IMR-90 (cell line): ENCODE measurements at regions of chr16 and their contacts with region 1.

Region 1: DNA sequence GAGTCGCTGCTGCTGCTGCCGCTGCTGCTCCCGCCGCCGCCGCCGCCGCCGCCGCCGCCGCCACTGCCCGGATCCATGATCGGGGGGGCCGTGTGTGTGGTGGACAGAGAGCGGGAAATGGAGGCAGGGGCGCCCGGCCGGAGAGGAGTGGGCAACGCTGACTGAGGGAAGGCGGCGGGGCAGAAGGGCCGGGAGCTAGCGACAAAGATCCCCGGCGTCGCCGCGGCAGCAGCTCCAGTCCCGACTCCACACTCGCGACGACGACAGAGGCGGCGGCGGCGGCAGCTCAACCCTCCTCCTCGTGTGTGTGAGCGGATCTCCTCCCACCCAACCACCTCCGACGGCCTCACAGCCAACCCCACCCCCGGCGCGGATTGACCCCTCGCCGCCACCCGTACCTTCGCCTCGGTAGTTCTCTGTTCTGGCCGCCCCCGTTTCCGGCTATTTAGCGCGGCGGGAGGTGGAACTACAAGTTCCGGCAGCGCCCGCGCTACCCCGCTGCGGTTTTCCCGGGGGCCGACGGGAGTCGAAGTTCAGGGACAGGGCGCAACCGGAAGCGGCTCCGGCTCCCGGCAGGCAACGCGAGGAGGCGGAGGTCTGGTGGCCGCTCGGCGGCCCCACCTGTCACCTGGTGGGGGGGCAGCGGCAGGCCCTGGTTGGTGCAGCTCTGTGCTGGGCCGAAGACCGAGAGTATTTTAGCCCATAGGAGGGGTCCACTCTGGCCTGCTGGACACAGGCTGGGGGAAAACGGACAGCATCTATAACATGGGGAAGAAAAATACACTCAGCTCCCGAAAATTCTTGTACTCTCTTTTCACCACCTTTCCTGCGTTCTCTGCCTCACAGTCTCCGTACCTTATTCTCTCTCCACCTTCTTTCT is at the start of gene GSPT1:
- DNase-seq: peak; percentile 97
- ATAC-seq: peak; percentile 96
- H3K4me3 ChIP-seq: peak within 1 kb of the TSS; percentile 94
- H3K27ac ChIP-seq: peak within 1 kb of the TSS; percentile 87
- H3K4me1 ChIP-seq: peaks cover 8% of the 10 kb centered on the region
- H3K27me3 ChIP-seq: peaks cover 7% of the 10 kb centered on the region
- CTCF ChIP-seq: no peak
- POLR2A ChIP-seq: peak; percentile 85
- RAD21 ChIP-seq: no peak
- total RNA-seq, gene GSPT1: 84.8 and 121 TPM in 2 replicates

Region 2: GRCh38 chr16:12017558-12017957 is 101.7 kb after region 1 on chr16:
- CTCF ChIA-PET with region 1: no interaction called
- POLR2A ChIA-PET with region 1: no interaction called
- dilution Hi-C with region 1: no loop called
- in situ Hi-C with region 1: no loop called
- intact Hi-C with region 1: loop called (anchors 5 kb)
- DNase-seq: peak; percentile 80
- ATAC-seq: peak; percentile 94
- H3K4me3 ChIP-seq: no peak overlapping the region
- H3K27ac ChIP-seq: peak overlapping the region; percentile 72; the same call in 1 of the 2 replicates
- H3K4me1 ChIP-seq: peaks cover 10% of the 10 kb centered on the region
- H3K27me3 ChIP-seq: no peaks in the 10 kb centered on the region
- CTCF ChIP-seq: no peak
- POLR2A ChIP-seq: no peak
- RAD21 ChIP-seq: no peak

Region 3: GRCh38 chr16:12057266-12057665 is 141.4 kb after region 1 on chr16:
- CTCF ChIA-PET with region 1: no interaction called
- POLR2A ChIA-PET with region 1: no interaction called
- dilution Hi-C with region 1: no loop called
- in situ Hi-C with region 1: no loop called
- intact Hi-C with region 1: loop called (anchors 1 kb)
- DNase-seq: peak; percentile 70
- ATAC-seq: peak; percentile 85
- H3K4me3 ChIP-seq: no peak overlapping the region
- H3K27ac ChIP-seq: no peak overlapping the region; the same call in 1 of the 2 replicates
- H3K4me1 ChIP-seq: peaks cover 10% of the 10 kb centered on the region
- H3K27me3 ChIP-seq: no peaks in the 10 kb centered on the region
- CTCF ChIP-seq: no peak
- POLR2A ChIP-seq: no peak
- RAD21 ChIP-seq: no peak